ENCODE measurements at regions of chr13 and their contacts with region 1.

Region 1: DNA sequence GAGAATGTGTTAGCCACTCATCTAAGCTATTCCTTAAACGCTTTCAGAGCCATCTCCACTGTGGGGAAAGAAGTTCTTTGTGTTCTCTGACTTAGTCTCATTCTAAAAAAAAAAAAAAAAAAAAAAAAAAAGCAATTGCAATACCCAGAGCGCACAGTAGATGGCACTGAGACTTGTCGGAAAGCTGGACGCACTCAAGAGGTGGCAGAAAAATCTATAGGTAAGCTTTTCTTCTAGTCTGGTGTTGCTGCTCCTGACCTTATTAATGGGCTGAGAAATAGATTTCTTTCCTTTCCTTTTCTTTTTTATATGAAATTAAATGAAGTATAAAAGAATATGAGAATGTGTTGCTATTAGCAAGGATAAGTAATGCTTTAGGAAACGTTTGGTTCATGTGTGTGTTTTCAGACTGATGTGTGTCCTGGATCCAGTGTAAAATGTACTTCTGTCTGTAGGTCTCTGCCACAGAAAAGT is 4.7 kb upstream of the GJB2 start:
- DNase-seq: peak; percentile 67
- H3K4me3 ChIP-seq: no peak overlapping the region
- H3K27ac ChIP-seq: no peak overlapping the region
- H3K4me1 ChIP-seq: peaks cover 30% of the 10 kb centered on the region
- H3K27me3 ChIP-seq: no peaks in the 10 kb centered on the region
- CTCF ChIP-seq: peak; percentile 81 to 82

Region 2: GRCh38 chr13:20231839-20232555 is 34.6 kb after region 1 on chr13 and contains the start of gene GJB6:
- CTCF ChIA-PET with region 1: interaction called, 11 read pairs
- dilution Hi-C with region 1: no loop called
- in situ Hi-C with region 1: no loop called
- intact Hi-C with region 1: no loop called
- DNase-seq: peak; percentile 8
- H3K4me3 ChIP-seq: peak within 1 kb of the TSS; percentile 22 to 44 (median 26)
- H3K27ac ChIP-seq: no peak within 1 kb of the TSS
- H3K4me1 ChIP-seq: peaks cover 5% of the 10 kb centered on the region
- H3K27me3 ChIP-seq: peaks cover 12% of the 10 kb centered on the region
- CTCF ChIP-seq: no peak
- total RNA-seq, gene GJB6: 2.1 to 27.5 TPM

Region 3: GRCh38 chr13:20294497-20294896 is 97.1 kb after region 1 on chr13:
- CTCF ChIA-PET with region 1: no interaction called
- dilution Hi-C with region 1: no loop called
- in situ Hi-C with region 1: no loop called
- intact Hi-C with region 1: no loop called
- DNase-seq: no peak
- H3K4me3 ChIP-seq: no peak overlapping the region
- H3K27ac ChIP-seq: no peak overlapping the region
- H3K4me1 ChIP-seq: peaks cover 7% of the 10 kb centered on the region
- H3K27me3 ChIP-seq: no peaks in the 10 kb centered on the region
- CTCF ChIP-seq: no peak

Region 4: DNA sequence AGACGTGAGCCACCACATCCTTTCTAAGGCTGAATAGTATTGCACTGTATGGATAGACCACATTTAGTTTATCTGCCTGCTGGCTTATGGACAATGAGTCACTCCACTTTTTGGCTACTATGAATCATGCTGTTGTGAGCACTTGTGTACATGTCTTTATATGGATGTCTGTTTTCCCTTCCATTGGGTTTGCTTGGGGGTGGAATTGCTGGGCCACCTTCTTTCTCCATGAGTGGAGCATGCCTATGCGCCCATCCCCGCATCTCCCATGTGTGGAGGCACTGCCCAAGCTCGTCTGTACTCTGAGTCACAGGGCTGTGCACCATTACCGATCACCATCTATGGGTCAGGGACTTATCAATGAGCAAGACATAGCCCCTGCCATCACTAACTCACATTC is 161.9 kb after region 1 on chr13:
- CTCF ChIA-PET with region 1: no interaction called
- dilution Hi-C with region 1: no loop called
- in situ Hi-C with region 1: no loop called
- intact Hi-C with region 1: loop called (anchors 2 kb)
- DNase-seq: peak; percentile 99
- H3K4me3 ChIP-seq: no peak overlapping the region
- H3K27ac ChIP-seq: peak overlapping the region; percentile 83
- H3K4me1 ChIP-seq: peaks cover 29% of the 10 kb centered on the region
- H3K27me3 ChIP-seq: no peaks in the 10 kb centered on the region
- CTCF ChIP-seq: no peak

Region 5: DNA sequence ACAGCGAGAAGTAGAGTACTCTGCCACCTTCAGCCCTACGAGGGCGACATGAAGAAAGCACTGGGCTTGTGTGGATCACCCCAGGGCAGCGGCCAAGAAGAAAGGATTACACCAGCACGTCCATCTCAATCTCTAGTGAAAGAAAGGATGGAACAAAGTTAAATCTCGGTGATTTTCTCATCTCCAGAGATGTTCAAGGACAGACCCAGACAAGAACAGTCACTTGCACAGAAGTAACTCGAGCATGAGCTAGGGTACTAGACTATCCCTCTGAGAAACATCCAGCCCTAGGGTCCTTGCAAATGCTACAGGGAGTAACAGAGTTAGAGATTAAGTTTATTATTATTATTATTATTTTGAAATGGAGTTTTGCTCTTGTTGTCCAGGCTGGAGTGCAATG is 221.6 kb after region 1 on chr13:
- CTCF ChIA-PET with region 1: no interaction called
- dilution Hi-C with region 1: loop called (anchors 5 kb)
- in situ Hi-C with region 1: no loop called
- intact Hi-C with region 1: loop called (anchors 1 kb)
- DNase-seq: no peak
- H3K4me3 ChIP-seq: no peak overlapping the region
- H3K27ac ChIP-seq: peak overlapping the region; percentile 56
- H3K4me1 ChIP-seq: peaks cover 7% of the 10 kb centered on the region
- H3K27me3 ChIP-seq: no peaks in the 10 kb centered on the region
- CTCF ChIP-seq: no peak

Region 6: GRCh38 chr13:20424949-20425348 is 227.6 kb after region 1 on chr13:
- CTCF ChIA-PET with region 1: no interaction called
- dilution Hi-C with region 1: loop called (anchors 5 kb)
- in situ Hi-C with region 1: no loop called
- intact Hi-C with region 1: no loop called
- DNase-seq: no peak
- H3K4me3 ChIP-seq: no peak overlapping the region
- H3K27ac ChIP-seq: no peak overlapping the region
- H3K4me1 ChIP-seq: peaks cover 44% of the 10 kb centered on the region
- H3K27me3 ChIP-seq: no peaks in the 10 kb centered on the region
- CTCF ChIP-seq: no peak